ENCODE measurements at regions of chr4 and their contacts with region 1.

Region 1: GRCh38 chr4:125314676-125315575 is at the start of gene FAT4:
- DNase-seq: peak; percentile 94
- H3K4me3 ChIP-seq: peak within 1 kb of the TSS; percentile 93 to 96 (median 96)
- H3K27ac ChIP-seq: no peak within 1 kb of the TSS
- H3K4me1 ChIP-seq: peaks cover 17% of the 10 kb centered on the region
- H3K27me3 ChIP-seq: peaks cover 2% of the 10 kb centered on the region
- CTCF ChIP-seq: peak in 1 of 2 donors; percentile 2
- total RNA-seq, gene FAT4: 1.5 to 5.5 TPM

Region 2: GRCh38 chr4:124727331-124727890 is 587.5 kb before region 1 on chr4:
- CTCF ChIA-PET with region 1: interaction called, 26 read pairs
- dilution Hi-C with region 1: no loop called
- in situ Hi-C with region 1: no loop called
- intact Hi-C with region 1: no loop called
- DNase-seq: no peak
- H3K4me3 ChIP-seq: no peak overlapping the region
- H3K27ac ChIP-seq: no peak overlapping the region
- H3K4me1 ChIP-seq: no peaks in the 10 kb centered on the region
- H3K27me3 ChIP-seq: no peaks in the 10 kb centered on the region
- CTCF ChIP-seq: no peak

Region 3: DNA sequence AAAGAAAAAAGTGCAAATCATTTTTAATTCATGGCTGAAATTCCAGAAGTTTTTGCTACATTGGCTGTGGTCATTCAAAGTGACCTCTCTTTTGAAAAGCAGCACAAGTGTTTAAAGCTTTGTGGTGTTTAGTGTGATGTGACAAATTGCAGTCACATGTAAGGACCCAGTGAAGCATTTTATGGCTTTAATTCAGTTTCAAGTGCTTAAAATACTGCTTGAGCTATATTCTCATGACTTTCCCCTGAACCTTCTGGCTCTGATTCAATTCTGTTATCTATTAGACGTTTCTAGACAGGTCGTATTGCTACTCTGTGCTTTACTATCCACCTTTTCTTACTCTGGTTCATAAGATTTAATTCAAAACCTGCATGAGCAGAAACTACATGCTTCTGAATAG is 105.6 kb after region 1 on chr4:
- CTCF ChIA-PET with region 1: no interaction called
- dilution Hi-C with region 1: no loop called
- in situ Hi-C with region 1: no loop called
- intact Hi-C with region 1: no loop called
- DNase-seq: no peak
- H3K4me3 ChIP-seq: no peak overlapping the region
- H3K27ac ChIP-seq: no peak overlapping the region
- H3K4me1 ChIP-seq: no peaks in the 10 kb centered on the region
- H3K27me3 ChIP-seq: no peaks in the 10 kb centered on the region
- CTCF ChIP-seq: no peak

Region 4: DNA sequence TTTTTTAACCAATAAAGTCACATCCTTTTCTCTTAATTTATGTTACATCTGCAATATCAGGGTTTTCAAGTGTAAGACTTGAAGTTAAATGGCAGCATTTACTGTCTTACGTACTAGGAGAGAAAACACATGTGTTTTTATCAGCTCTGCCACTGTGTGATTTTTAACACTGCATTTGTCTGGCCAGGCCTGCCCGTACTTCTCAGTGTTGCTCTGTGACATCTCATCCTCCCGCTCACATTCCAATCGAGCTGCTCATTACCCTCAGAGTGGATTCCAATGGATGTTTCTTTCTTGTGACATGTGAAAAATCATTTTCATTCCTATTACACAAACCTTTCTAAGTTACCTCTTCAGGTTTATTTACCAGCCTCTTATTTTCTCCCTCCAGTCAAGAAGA is 420.2 kb after region 1 on chr4:
- CTCF ChIA-PET with region 1: no interaction called
- dilution Hi-C with region 1: no loop called
- in situ Hi-C with region 1: loop called (anchors 5 kb)
- intact Hi-C with region 1: loop called (anchors 2 kb)
- DNase-seq: peak; percentile 79
- H3K4me3 ChIP-seq: no peak overlapping the region
- H3K27ac ChIP-seq: peak overlapping the region; percentile 88
- H3K4me1 ChIP-seq: peaks cover 30% of the 10 kb centered on the region
- H3K27me3 ChIP-seq: no peaks in the 10 kb centered on the region
- CTCF ChIP-seq: no peak

Region 5: GRCh38 chr4:126223784-126224407 is 909.0 kb after region 1 on chr4:
- CTCF ChIA-PET with region 1: interaction called, 4 read pairs
- dilution Hi-C with region 1: no loop called
- in situ Hi-C with region 1: no loop called
- intact Hi-C with region 1: loop called (anchors 5 kb)
- DNase-seq: peak; percentile 2
- H3K4me3 ChIP-seq: no peak overlapping the region
- H3K27ac ChIP-seq: no peak overlapping the region
- H3K4me1 ChIP-seq: no peaks in the 10 kb centered on the region
- H3K27me3 ChIP-seq: no peaks in the 10 kb centered on the region
- CTCF ChIP-seq: peak; percentile 69 to 74

Region 6: GRCh38 chr4:126583509-126583908 is 1268.6 kb after region 1 on chr4:
- CTCF ChIA-PET with region 1: no interaction called
- dilution Hi-C with region 1: no loop called
- in situ Hi-C with region 1: loop called in 1 of 2 experiments (anchors 25 kb)
- intact Hi-C with region 1: loop called (anchors 5 kb)
- DNase-seq: peak; percentile 20
- H3K4me3 ChIP-seq: no peak overlapping the region
- H3K27ac ChIP-seq: no peak overlapping the region
- H3K4me1 ChIP-seq: no peaks in the 10 kb centered on the region
- H3K27me3 ChIP-seq: no peaks in the 10 kb centered on the region
- CTCF ChIP-seq: peak; percentile 46 to 65

Region 7: GRCh38 chr4:126778348-126778747 is 1463.4 kb after region 1 on chr4:
- CTCF ChIA-PET with region 1: no interaction called
- dilution Hi-C with region 1: no loop called
- in situ Hi-C with region 1: no loop called
- intact Hi-C with region 1: loop called (anchors 10 kb)
- DNase-seq: peak; percentile 60
- H3K4me3 ChIP-seq: peak overlapping the region in 2 of 3 experiments; percentile 45 to 60
- H3K27ac ChIP-seq: peak overlapping the region; percentile 83
- H3K4me1 ChIP-seq: peaks cover 5% of the 10 kb centered on the region
- H3K27me3 ChIP-seq: no peaks in the 10 kb centered on the region
- CTCF ChIP-seq: no peak